Caco-2 (cell line): ENCODE measurements at regions of chr3 and their contacts with region 1.

Region 1: DNA sequence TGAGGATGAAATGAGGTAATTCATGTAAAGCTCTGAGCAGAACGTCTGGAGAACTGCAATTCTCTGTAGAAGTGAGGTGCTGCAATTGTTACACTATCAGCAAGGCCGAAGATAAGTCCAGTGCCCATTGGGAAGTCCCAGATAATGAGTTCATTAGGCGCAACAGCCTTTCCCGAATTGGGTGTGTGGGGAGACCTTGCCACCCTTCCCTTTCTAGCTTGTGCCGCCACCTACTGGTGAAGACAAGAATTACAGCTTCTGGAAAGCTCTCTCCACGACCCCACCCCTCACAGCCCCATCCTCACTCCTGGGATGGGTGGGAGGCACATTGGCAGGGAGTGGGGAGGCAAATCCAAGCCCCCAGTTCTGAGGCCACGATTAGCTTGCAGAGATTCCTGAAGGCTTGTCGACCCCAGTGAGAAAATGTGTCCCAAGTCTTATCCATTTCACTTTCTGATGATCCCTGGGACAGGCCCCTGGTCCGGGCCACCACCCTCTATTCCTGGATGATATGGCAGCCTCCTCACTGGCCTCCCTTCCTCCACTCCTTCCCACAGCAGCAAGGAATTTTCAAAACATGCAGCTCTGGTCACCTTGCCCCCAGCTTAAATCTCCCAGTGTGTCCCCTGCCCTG is 36.4 kb downstream of the FAM3D start:
- DNase-seq: peak; percentile 73 to 83
- H3K4me3 ChIP-seq: no peak overlapping the region
- H3K4me3 Mint-ChIP-seq: no peak overlapping the region
- H3K27ac Mint-ChIP-seq: no peak overlapping the region
- H3K4me1 ChIP-seq: peaks cover 22% of the 10 kb centered on the region
- H3K4me1 Mint-ChIP-seq: no peaks in the 10 kb centered on the region
- H3K27me3 ChIP-seq: no peaks in the 10 kb centered on the region
- H3K27me3 Mint-ChIP-seq: no peaks in the 10 kb centered on the region
- CTCF ChIP-seq: peak; percentile 85 to 94

Region 2: GRCh38 chr3:58324391-58325390 is 305.5 kb before region 1 on chr3:
- CTCF ChIA-PET with region 1: no interaction called
- POLR2A ChIA-PET with region 1: no interaction called
- intact Hi-C with region 1: loop called (anchors 10 kb)
- DNase-seq: no peak
- H3K4me3 ChIP-seq: no peak overlapping the region
- H3K4me3 Mint-ChIP-seq: no peak overlapping the region
- H3K27ac Mint-ChIP-seq: no peak overlapping the region
- H3K4me1 ChIP-seq: peaks cover 17% of the 10 kb centered on the region
- H3K4me1 Mint-ChIP-seq: peaks cover 6% of the 10 kb centered on the region
- H3K27me3 ChIP-seq: no peaks in the 10 kb centered on the region
- H3K27me3 Mint-ChIP-seq: no peaks in the 10 kb centered on the region
- CTCF ChIP-seq: no peak

Region 3: GRCh38 chr3:58422756-58423325 is 207.4 kb before region 1 on chr3:
- CTCF ChIA-PET with region 1: no interaction called
- POLR2A ChIA-PET with region 1: no interaction called
- intact Hi-C with region 1: loop called (anchors 1 kb)
- DNase-seq: peak; percentile 45 to 46
- H3K4me3 ChIP-seq: no peak overlapping the region
- H3K4me3 Mint-ChIP-seq: no peak overlapping the region
- H3K27ac Mint-ChIP-seq: no peak overlapping the region
- H3K4me1 ChIP-seq: peaks cover 13% of the 10 kb centered on the region
- H3K4me1 Mint-ChIP-seq: peaks cover 7% of the 10 kb centered on the region
- H3K27me3 ChIP-seq: no peaks in the 10 kb centered on the region
- H3K27me3 Mint-ChIP-seq: no peaks in the 10 kb centered on the region
- CTCF ChIP-seq: peak; percentile 52 to 65

Region 4: DNA sequence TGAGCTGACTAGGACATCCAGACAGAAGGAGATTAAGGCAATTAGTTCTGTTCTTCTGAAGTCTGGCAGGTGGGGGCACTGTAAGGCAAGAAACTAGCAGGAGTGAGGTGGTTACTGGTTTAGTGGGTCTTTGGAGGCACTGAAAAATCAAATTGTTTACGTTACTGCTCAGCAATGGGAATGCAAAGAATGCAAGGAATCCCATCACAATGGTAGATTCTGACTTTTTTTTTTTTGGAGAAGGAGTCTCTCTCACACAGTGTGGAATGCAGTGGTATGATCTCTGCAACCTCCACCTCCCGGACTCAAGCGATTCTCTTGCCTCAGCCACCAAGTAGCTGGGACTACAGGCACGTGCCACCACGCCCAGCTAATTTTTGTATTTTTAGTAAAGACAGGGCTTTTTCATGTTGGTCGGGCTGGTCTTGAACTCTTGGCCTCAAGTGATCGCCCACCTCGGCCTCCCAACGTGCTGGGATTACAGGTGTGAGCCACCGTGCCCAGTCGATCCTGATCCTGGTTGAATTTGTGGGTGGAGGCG is 69.4 kb before region 1 on chr3:
- CTCF ChIA-PET with region 1: interaction called, 24 read pairs
- POLR2A ChIA-PET with region 1: interaction called, 3 read pairs
- intact Hi-C with region 1: loop called (anchors 1 kb)
- DNase-seq: peak; percentile 86
- H3K4me3 ChIP-seq: no peak overlapping the region
- H3K4me3 Mint-ChIP-seq: peak overlapping the region; percentile 33
- H3K27ac Mint-ChIP-seq: peak overlapping the region; percentile 91
- H3K4me1 ChIP-seq: peaks cover 42% of the 10 kb centered on the region
- H3K4me1 Mint-ChIP-seq: peaks cover 38% of the 10 kb centered on the region
- H3K27me3 ChIP-seq: no peaks in the 10 kb centered on the region
- H3K27me3 Mint-ChIP-seq: no peaks in the 10 kb centered on the region
- CTCF ChIP-seq: peak; percentile 43 to 51

Region 5: DNA sequence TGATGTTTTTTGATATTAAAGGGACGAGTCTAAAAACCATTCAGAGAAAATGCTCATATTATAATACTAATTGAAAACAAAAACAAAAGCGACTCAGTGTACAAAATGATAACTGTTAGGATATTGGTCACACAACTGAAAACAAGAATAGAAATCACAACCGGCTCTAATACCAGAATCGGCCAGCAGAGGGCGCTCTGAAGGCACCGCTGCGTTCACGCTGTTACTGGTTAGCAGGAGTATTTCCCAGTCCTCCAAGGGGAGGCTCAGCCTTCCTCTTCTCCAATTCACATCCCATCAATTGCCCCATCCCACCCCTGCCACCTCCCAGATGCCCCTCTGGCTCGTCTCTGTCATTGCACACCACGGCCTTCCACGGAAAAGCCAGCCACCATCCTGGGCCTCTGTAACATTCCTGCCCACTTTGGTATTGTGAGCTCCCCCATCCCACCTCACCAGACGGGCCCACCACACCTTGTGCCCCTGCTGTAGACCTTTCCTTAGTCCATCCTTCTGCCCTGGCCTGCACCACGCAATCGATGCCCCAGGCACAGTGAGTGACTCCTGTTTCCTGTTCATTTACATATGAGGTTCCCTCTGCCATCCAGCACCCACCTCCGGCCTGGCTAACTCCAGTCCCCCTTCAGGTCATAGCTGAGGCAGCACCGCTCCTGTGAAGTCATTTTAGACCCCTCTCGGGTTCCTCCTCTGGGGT is 61.5 kb before region 1 on chr3:
- CTCF ChIA-PET with region 1: interaction called, 29 read pairs
- POLR2A ChIA-PET with region 1: no interaction called
- intact Hi-C with region 1: loop called (anchors 1 kb)
- DNase-seq: peak; percentile 62 to 81
- H3K4me3 ChIP-seq: no peak overlapping the region
- H3K4me3 Mint-ChIP-seq: no peak overlapping the region
- H3K27ac Mint-ChIP-seq: peak overlapping the region; percentile 38
- H3K4me1 ChIP-seq: peaks cover 20% of the 10 kb centered on the region
- H3K4me1 Mint-ChIP-seq: peaks cover 19% of the 10 kb centered on the region
- H3K27me3 ChIP-seq: no peaks in the 10 kb centered on the region
- H3K27me3 Mint-ChIP-seq: no peaks in the 10 kb centered on the region
- CTCF ChIP-seq: peak; percentile 74 to 92

Region 6: DNA sequence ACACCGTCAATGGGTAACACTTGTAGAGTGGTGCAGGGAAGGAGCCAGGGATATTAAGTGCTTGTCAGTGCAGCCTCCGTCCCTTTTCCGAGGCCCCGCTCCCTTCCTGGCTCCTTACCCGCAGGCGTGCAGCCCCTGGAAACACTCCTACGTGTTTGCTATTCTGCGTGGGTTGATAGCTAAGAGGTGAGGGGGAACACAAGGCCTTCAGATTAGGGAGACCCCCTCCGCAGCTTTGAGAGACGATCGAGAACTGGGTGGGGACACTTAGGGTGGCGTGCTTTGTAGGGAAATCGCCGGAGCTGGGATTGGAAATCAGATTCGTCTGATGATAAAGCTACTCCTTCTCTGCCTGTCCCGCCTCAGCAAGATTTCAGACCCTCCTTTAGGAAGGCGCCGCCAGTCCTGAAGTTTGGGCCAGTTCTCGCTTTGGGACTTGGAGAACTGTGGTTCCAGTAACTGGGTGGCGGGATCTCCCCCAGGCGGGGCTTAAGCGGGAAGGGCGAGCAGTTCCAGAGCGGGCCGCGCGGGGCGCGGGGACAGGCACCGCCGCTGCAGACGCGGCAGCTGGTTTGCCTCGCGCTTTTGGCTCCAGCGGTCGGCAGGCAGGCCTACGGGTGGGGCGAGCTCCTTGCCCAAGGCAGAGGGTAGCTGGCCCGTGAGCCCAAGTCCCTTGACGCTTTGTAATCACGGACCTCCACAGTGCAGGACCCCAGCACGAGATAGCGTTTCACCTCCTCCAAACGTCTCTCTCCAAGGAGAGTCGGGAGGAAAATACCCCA is 45.0 kb before region 1 on chr3:
- CTCF ChIA-PET with region 1: interaction called, 8 read pairs
- POLR2A ChIA-PET with region 1: no interaction called
- intact Hi-C with region 1: loop called (anchors 1 kb)
- DNase-seq: peak; percentile 75 to 83
- H3K4me3 ChIP-seq: peak overlapping the region; percentile 43
- H3K4me3 Mint-ChIP-seq: peak overlapping the region; percentile 82
- H3K27ac Mint-ChIP-seq: no peak overlapping the region
- H3K4me1 ChIP-seq: peaks cover 9% of the 10 kb centered on the region; the same call in 1 of the 2 replicates
- H3K4me1 Mint-ChIP-seq: peaks cover 9% of the 10 kb centered on the region
- H3K27me3 ChIP-seq: no peaks in the 10 kb centered on the region; the same call in none of the 2 replicates
- H3K27me3 Mint-ChIP-seq: peaks cover 5% of the 10 kb centered on the region
- CTCF ChIP-seq: peak; percentile 80 to 81